ENCODE measurements at regions of chr6 and their contacts with region 1.

Region 1: DNA sequence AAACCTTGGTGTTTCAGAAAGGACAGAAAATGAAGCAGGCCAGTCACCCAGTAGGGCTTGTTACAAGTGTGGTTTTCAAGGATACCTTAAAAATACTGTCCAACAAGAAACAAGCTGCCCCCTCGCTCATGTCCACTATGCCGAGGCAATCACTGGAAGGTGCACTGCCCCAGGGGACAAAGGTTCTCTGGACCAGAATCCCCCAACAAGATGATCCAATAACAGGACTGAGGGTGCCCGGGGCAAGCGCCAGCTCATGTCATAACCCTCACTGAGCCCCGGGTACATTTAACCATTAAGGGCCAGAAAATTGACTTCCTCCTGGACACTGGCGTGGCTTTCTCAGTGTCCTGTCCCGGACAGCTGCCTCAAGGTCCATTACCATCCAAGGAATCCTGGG is 6.6 kb upstream of the NT5DC1 start:
- DNase-seq: no peak

Region 2: DNA sequence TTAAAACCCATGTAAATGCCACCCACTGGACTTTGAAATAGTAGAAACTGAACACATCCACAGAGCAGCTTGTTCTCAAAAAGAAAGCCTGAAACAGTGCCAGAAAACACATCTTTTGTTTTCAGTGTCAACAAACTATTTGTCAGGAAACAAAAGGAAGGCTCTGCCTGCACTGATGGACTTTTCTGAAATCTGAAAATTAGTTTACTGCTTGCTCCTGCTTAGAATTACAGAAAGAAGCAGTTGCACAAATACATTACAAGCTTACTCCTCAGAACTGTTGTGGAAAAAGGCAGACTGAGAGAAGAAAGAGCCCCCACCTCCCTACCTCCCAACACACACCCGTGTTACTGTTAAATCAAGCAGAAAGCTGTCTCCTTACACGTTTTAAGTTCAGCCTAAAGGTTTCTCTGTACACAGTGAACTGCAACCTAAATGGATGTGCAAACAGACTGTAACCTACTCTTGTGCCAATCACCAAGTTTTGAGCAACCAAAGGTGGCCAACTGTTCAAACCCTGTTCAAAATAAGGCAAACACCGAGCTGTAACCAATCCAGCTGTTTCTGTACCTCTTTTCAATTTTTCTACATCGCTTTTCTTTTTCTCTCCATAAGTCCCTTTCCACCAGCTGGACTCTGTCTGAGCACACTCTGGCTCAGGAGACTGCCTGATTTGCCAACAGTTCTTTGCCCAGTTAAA is 77.0 kb before region 1 on chr6:
- intact Hi-C with region 1: loop called in 1 of 2 experiments (anchors 2 kb)
- DNase-seq: no peak

Measured in posterior vena cava (tissue), 2 donors.